CD4-positive, alpha-beta T cell (primary cell): ENCODE measurements at regions of chr12 and their contacts with region 1.

Region 1: GRCh38 chr12:10982244-10982643 is 4.5 kb downstream of the TAS2R50 start:
- DNase-seq: peak in 11 of 14 experiments; percentile 0 to 91 (median 22)
- ATAC-seq: peak; percentile 92
- H3K4me3 ChIP-seq: no peak overlapping the region
- H3K4me3 Mint-ChIP-seq: peak overlapping the region; percentile 55
- H3K27ac ChIP-seq: no peak overlapping the region
- H3K27ac Mint-ChIP-seq: peak overlapping the region; percentile 57
- H3K4me1 ChIP-seq: peaks cover 18% of the 10 kb centered on the region
- H3K4me1 Mint-ChIP-seq: peaks cover 67% of the 10 kb centered on the region
- H3K27me3 ChIP-seq: no peaks in the 10 kb centered on the region
- H3K27me3 Mint-ChIP-seq: no peaks in the 10 kb centered on the region
- CTCF ChIP-seq: no peak

Region 2: DNA sequence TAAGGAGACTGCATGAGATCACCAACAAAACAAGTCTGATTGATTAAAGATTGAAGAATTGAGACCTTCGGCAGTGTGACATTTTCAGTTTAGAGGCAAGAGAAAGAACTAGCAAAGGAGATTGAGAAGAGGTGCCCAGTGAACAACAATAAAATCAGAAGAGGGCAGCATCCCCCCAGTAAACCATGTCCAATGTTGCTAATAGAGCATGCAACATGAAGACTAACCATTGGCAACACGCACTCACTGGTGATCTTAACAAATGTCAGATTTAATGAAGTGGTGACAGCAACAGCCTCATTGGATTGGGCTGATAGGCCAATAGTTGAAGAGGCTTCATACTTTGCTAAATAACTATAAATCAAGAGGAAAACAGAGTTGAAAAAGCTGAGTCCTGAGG is 22.4 kb before region 1 on chr12:
- CTCF ChIA-PET with region 1: no interaction called
- POLR2A ChIA-PET with region 1: no interaction called
- intact Hi-C with region 1: loop called in 1 of 2 experiments (anchors 1 kb)
- DNase-seq: peak in 3 of 14 experiments; percentile 23 to 29 (median 27)
- ATAC-seq: peak; percentile 13
- H3K4me3 ChIP-seq: no peak overlapping the region
- H3K4me3 Mint-ChIP-seq: no peak overlapping the region
- H3K27ac ChIP-seq: no peak overlapping the region
- H3K27ac Mint-ChIP-seq: peak overlapping the region; percentile 37
- H3K4me1 ChIP-seq: peaks cover 10% of the 10 kb centered on the region
- H3K4me1 Mint-ChIP-seq: peaks cover 46% of the 10 kb centered on the region
- H3K27me3 ChIP-seq: no peaks in the 10 kb centered on the region
- H3K27me3 Mint-ChIP-seq: no peaks in the 10 kb centered on the region
- CTCF ChIP-seq: no peak